HepG2 (cell line): ENCODE measurements at regions of chr3 and their contacts with region 1.

Region 1: GRCh38 chr3:89851974-89852621 is 744.7 kb downstream of the EPHA3 start:
- DNase-seq: peak; percentile 36
- ATAC-seq: peak; percentile 95
- H3K4me3 ChIP-seq: no peak overlapping the region
- H3K27ac ChIP-seq: no peak overlapping the region
- H3K4me1 ChIP-seq: no peaks in the 10 kb centered on the region
- H3K27me3 ChIP-seq: no peaks in the 10 kb centered on the region; a peak in 1 of 5 replicates
- CTCF ChIP-seq: peak; percentile 75
- EP300 ChIP-seq: no peak
- POLR2A ChIP-seq: no peak
- RAD21 ChIP-seq: peak; percentile 47; the same call in 1 of the 2 replicates

Region 2: GRCh38 chr3:88203642-88204055 is 1648.4 kb before region 1 on chr3:
- CTCF ChIA-PET with region 1: no interaction called
- POLR2A ChIA-PET with region 1: no interaction called
- in situ Hi-C with region 1: loop called (anchors 25 kb)
- intact Hi-C with region 1: no loop called
- DNase-seq: peak; percentile 40
- ATAC-seq: peak; percentile 98
- H3K4me3 ChIP-seq: no peak overlapping the region
- H3K27ac ChIP-seq: no peak overlapping the region
- H3K4me1 ChIP-seq: no peaks in the 10 kb centered on the region
- H3K27me3 ChIP-seq: no peaks in the 10 kb centered on the region
- CTCF ChIP-seq: peak; percentile 87
- EP300 ChIP-seq: no peak
- POLR2A ChIP-seq: no peak
- RAD21 ChIP-seq: peak; percentile 64

Region 3: DNA sequence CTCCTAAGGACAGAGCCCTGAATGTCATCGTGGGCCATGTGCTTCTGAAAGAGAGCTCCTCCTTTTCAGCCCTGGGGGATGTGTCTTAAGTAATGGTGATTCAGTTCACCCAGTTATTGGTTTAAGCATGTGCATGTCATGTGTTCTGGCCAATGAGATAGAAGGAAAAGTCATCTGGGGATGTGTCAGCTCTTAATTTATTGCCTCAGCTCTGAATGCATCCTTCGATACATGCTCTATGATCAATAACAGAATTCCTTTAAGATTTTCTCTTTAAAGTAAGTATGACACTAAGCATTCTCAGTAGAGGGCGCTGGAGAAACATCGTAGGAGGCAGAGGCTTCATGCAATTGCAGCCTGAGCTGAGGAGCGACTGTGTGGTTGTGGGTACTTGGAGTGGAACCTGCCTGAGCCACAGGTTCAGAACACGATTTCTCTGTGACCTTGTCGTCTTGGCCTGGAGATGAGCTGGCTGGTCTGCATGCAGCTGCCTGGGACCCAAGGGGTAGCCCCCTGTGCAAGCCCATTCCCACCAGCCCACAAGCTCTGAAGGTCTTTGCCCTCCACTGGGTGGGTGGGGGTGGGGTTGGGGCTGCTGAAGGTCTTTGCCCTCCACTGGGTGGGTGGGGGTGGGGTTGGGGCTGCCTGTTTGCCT is 1632.8 kb before region 1 on chr3:
- CTCF ChIA-PET with region 1: no interaction called
- POLR2A ChIA-PET with region 1: no interaction called
- in situ Hi-C with region 1: loop called (anchors 25 kb)
- intact Hi-C with region 1: loop called (anchors 5 kb)
- DNase-seq: peak; percentile 69
- ATAC-seq: peak; percentile 99
- H3K4me3 ChIP-seq: no peak overlapping the region; a peak in 1 of 6 replicates
- H3K27ac ChIP-seq: no peak overlapping the region
- H3K4me1 ChIP-seq: no peaks in the 10 kb centered on the region
- H3K27me3 ChIP-seq: no peaks in the 10 kb centered on the region
- CTCF ChIP-seq: peak; percentile 84
- EP300 ChIP-seq: no peak
- POLR2A ChIP-seq: no peak
- RAD21 ChIP-seq: peak; percentile 50; the same call in 1 of the 2 replicates

Region 4: DNA sequence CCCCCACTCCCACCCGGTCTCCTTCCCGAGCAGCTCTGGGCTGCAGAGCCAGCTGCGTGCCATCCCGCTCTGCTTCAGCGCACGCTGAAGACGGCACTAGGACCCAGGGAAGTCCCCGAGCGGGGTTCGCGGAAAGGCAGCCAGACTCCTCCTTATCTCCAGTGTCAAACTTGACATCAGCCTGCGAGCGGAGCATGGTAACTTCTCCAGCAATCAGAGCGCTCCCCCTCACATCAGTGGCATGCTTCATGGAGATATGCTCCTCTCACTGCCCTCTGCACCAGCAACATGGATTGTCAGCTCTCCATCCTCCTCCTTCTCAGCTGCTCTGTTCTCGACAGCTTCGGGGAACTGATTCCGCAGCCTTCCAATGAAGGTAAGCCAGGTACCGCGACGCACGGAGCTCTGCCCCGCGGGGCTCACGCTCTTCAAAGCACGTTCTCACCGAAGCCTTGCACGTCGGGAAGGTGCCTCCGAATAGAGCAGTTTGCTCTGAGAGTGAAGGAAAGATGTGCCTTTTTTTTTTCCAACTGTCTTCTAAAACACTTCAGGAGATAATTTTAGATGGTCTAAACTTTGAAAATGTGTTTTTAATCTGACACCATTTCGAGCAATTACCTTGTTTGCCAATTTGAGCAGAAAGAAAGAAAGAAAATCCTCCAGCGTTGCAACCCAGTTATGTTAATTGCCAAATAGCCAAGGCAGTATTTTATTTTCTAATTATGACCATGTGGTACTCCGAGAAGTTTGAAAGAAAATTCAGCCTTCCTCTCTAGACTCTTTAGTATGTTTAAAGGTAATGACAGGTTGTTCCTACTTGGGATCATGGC is 744.4 kb before region 1 on chr3 and contains the start of gene EPHA3:
- CTCF ChIA-PET with region 1: no interaction called
- POLR2A ChIA-PET with region 1: no interaction called
- in situ Hi-C with region 1: no loop called
- intact Hi-C with region 1: loop called (anchors 10 kb)
- DNase-seq: peak; percentile 12
- ATAC-seq: peak; percentile 99
- H3K4me3 ChIP-seq: peak within 1 kb of the TSS in 1 of 3 experiments; percentile 53; a peak in 2 of 6 replicates
- H3K27ac ChIP-seq: no peak within 1 kb of the TSS
- H3K4me1 ChIP-seq: peaks cover 12% of the 10 kb centered on the region; the same call in 1 of the 2 replicates
- H3K27me3 ChIP-seq: peaks cover 0 to 8% of the 10 kb centered on the region in 2 experiments; a peak in 1 of 5 replicates
- CTCF ChIP-seq: no peak
- EP300 ChIP-seq: no peak
- POLR2A ChIP-seq: no peak
- RAD21 ChIP-seq: no peak
- total RNA-seq, gene EPHA3: not detected in 2 replicates

Region 5: DNA sequence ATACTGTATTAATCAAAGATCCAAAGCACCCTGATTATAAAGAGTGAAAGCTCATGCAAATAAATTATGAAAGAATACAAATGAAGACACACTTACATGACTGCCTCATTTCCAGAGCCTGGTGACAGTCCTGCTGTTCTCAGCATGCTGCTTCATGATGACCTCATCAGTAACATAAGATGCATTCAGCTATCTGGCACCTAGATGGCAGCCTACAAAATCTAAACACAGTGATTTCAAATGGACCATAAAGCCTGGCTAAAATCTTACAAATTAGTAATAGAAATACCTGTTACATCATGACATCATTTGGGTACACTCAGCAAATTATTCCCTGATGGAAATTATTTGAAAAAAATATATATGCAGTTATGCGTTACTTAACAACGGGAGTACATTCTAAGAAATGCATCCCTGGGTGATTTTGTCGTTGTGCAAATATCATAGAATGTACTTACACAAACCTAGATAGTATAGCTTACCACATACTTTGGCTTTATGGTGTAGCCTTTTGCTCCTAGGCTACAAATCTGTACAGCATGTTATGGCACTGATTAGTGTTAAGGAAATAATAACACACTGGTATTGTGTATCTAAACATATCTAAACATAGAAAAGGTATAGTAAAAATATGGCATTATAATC is 537.5 kb before region 1 on chr3:
- CTCF ChIA-PET with region 1: no interaction called
- POLR2A ChIA-PET with region 1: no interaction called
- in situ Hi-C with region 1: no loop called
- intact Hi-C with region 1: loop called (anchors 1 kb)
- DNase-seq: peak; percentile 14
- ATAC-seq: peak; percentile 89
- H3K4me3 ChIP-seq: no peak overlapping the region
- H3K27ac ChIP-seq: no peak overlapping the region
- H3K4me1 ChIP-seq: no peaks in the 10 kb centered on the region
- H3K27me3 ChIP-seq: no peaks in the 10 kb centered on the region
- CTCF ChIP-seq: no peak
- EP300 ChIP-seq: no peak
- POLR2A ChIP-seq: no peak
- RAD21 ChIP-seq: no peak

Region 6: DNA sequence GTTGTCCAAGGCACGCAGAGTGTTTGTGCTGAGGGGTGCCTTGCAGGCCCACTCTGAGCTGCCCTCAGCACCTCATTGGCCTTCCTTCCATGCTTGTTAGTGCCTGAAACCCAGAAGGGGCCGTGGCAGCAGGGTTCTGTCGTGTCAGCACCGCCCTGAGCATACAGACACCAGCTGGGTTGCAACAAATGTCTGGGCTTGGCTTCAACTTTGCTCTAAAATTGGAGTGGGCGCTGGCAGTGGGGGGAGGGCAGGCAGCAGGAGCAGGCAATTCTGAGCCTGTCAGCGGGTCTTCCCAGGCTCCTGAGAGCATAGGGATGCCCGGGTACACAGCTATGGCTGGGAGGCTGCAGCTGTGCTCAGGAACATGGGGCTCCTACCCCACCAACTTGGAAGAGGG is 280.4 kb before region 1 on chr3:
- CTCF ChIA-PET with region 1: no interaction called
- POLR2A ChIA-PET with region 1: no interaction called
- in situ Hi-C with region 1: loop called (anchors 25 kb)
- intact Hi-C with region 1: no loop called
- DNase-seq: no peak
- ATAC-seq: no peak
- H3K4me3 ChIP-seq: no peak overlapping the region
- H3K27ac ChIP-seq: no peak overlapping the region
- H3K4me1 ChIP-seq: no peaks in the 10 kb centered on the region
- H3K27me3 ChIP-seq: no peaks in the 10 kb centered on the region
- CTCF ChIP-seq: no peak
- EP300 ChIP-seq: no peak
- POLR2A ChIP-seq: no peak
- RAD21 ChIP-seq: no peak

Region 7: GRCh38 chr3:90091204-90091924 is 239.3 kb after region 1 on chr3:
- CTCF ChIA-PET with region 1: no interaction called
- POLR2A ChIA-PET with region 1: no interaction called
- in situ Hi-C with region 1: no loop called
- intact Hi-C with region 1: loop called (anchors 5 kb)
- DNase-seq: peak; percentile 2
- ATAC-seq: peak; percentile 89
- H3K4me3 ChIP-seq: no peak overlapping the region
- H3K27ac ChIP-seq: no peak overlapping the region
- H3K4me1 ChIP-seq: no peaks in the 10 kb centered on the region
- H3K27me3 ChIP-seq: no peaks in the 10 kb centered on the region; a peak in 1 of 5 replicates
- CTCF ChIP-seq: peak; percentile 42
- EP300 ChIP-seq: no peak
- POLR2A ChIP-seq: no peak
- RAD21 ChIP-seq: no peak